Activated CD8-positive, alpha-beta T cell treated with anti-CD3 and anti-CD28 coated beads, Interleukin-2, amount 10 ng/mL, durations not matched to agents 7 days and 5 days (primary cell): ENCODE measurements at regions of chr17 and their contacts with region 1.

Region 1: GRCh38 chr17:48024937-48025906 is 12.4 kb downstream of the COPZ2 start:
- DNase-seq: peak; percentile 98
- ATAC-seq: peak; percentile 92
- H3K4me3 Mint-ChIP-seq: peak overlapping the region; percentile 80
- H3K27ac Mint-ChIP-seq: peak overlapping the region; percentile 71
- H3K4me1 Mint-ChIP-seq: peaks cover 33% of the 10 kb centered on the region
- H3K27me3 Mint-ChIP-seq: peaks cover 17% of the 10 kb centered on the region

Region 2: GRCh38 chr17:47978324-47978723 is 46.9 kb before region 1 on chr17:
- CTCF ChIA-PET with region 1: interaction called, 10 read pairs
- POLR2A ChIA-PET with region 1: no interaction called
- DNase-seq: peak; percentile 72
- ATAC-seq: peak; percentile 88
- H3K4me3 Mint-ChIP-seq: no peak overlapping the region
- H3K27ac Mint-ChIP-seq: no peak overlapping the region
- H3K4me1 Mint-ChIP-seq: peaks cover 29% of the 10 kb centered on the region
- H3K27me3 Mint-ChIP-seq: no peaks in the 10 kb centered on the region

Region 3: GRCh38 chr17:48047741-48048383 is 22.6 kb after region 1 on chr17 and contains the start of gene NFE2L1:
- CTCF ChIA-PET with region 1: interaction called, 113 read pairs
- POLR2A ChIA-PET with region 1: interaction called, 6 read pairs
- DNase-seq: peak; percentile 100
- ATAC-seq: peak; percentile 97
- H3K4me3 Mint-ChIP-seq: peak within 1 kb of the TSS; percentile 97
- H3K27ac Mint-ChIP-seq: peak within 1 kb of the TSS; percentile 95
- H3K4me1 Mint-ChIP-seq: peaks cover 56% of the 10 kb centered on the region
- H3K27me3 Mint-ChIP-seq: no peaks in the 10 kb centered on the region
- total RNA-seq, gene NFE2L1: 44.1 to 50.7 TPM

Region 4: DNA sequence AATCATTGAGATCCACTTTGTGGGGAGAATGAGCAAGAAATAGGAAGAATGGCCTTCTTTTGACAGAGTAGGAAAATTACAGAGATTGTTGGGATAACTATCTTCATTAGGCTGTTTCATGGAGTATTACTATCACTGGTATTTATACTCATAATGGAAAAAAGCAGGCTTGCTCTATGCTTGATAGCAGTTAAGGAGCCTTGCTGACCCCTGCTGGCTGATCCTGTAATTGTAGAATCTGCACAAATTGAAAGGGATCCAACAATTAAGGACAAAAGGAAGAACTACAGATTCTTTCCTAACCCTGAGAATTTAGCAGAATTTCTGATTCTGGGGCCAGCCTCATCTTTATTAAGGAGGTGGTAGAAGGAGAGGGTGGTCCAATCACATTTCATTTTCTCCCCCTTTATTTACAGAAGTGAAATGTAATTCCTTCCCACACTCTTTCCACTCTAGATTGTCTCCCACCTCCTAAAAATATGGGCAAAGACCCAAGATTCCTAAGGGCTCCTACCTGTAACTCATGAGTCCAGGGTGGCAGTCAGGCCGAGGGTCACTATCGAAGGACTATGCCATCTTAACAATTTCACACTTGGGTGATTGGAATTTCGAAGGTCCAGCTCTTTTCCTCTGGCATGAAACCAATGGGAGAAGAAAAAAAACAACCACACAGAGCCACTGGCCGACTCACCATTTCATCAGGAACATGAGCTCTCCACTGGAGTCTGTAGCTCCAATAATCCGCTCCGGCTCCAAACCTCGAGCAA is 49.3 kb after region 1 on chr17:
- CTCF ChIA-PET with region 1: interaction called, 113 read pairs
- POLR2A ChIA-PET with region 1: interaction called, 6 read pairs
- DNase-seq: peak; percentile 82
- ATAC-seq: peak; percentile 71
- H3K4me3 Mint-ChIP-seq: no peak overlapping the region
- H3K27ac Mint-ChIP-seq: no peak overlapping the region
- H3K4me1 Mint-ChIP-seq: no peaks in the 10 kb centered on the region
- H3K27me3 Mint-ChIP-seq: no peaks in the 10 kb centered on the region

Region 5: GRCh38 chr17:48107168-48108132 is 82.2 kb after region 1 on chr17 and contains the start of gene SNX11:
- CTCF ChIA-PET with region 1: interaction called, 33 read pairs
- POLR2A ChIA-PET with region 1: no interaction called
- DNase-seq: peak; percentile 94
- ATAC-seq: peak; percentile 95
- H3K4me3 Mint-ChIP-seq: peak within 1 kb of the TSS; percentile 99
- H3K27ac Mint-ChIP-seq: peak within 1 kb of the TSS; percentile 98
- H3K4me1 Mint-ChIP-seq: peaks cover 67% of the 10 kb centered on the region
- H3K27me3 Mint-ChIP-seq: no peaks in the 10 kb centered on the region
- total RNA-seq, gene SNX11: 33.3 to 34.2 TPM

Region 6: GRCh38 chr17:48131216-48131824 is 106.1 kb after region 1 on chr17:
- CTCF ChIA-PET with region 1: interaction called, 19 read pairs
- POLR2A ChIA-PET with region 1: no interaction called
- DNase-seq: peak; percentile 70
- ATAC-seq: peak; percentile 80
- H3K4me3 Mint-ChIP-seq: no peak overlapping the region
- H3K27ac Mint-ChIP-seq: peak overlapping the region; percentile 39
- H3K4me1 Mint-ChIP-seq: peaks cover 5% of the 10 kb centered on the region
- H3K27me3 Mint-ChIP-seq: no peaks in the 10 kb centered on the region